AG04450 (cell line): ENCODE measurements at regions of chr6 and their contacts with region 1.

Region 1: DNA sequence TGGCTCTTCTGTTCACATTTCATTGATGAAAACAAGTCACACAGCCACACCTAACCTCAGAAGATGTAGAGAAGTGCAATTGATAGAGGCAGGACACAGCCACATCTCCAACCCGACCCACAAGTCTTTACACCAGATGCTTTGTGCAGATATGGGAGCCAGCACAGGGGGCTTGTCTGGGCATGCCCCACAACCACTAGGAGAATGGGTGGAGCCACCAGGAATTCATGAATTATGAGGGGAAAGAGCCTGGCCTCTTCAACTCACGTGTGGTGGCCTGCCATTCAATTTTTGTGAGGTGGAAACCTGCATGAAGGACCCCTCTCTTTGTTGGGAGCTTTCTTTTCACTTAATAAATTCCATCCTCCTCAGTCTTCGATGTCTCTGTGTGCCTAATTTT is 79.1 kb downstream of the OGFRL1 start:
- DNase-seq: no peak
- H3K4me3 ChIP-seq: no peak overlapping the region
- H3K27ac ChIP-seq: peak overlapping the region; percentile 25
- H3K27me3 ChIP-seq: no peaks in the 10 kb centered on the region
- CTCF ChIP-seq: no peak

Region 2: DNA sequence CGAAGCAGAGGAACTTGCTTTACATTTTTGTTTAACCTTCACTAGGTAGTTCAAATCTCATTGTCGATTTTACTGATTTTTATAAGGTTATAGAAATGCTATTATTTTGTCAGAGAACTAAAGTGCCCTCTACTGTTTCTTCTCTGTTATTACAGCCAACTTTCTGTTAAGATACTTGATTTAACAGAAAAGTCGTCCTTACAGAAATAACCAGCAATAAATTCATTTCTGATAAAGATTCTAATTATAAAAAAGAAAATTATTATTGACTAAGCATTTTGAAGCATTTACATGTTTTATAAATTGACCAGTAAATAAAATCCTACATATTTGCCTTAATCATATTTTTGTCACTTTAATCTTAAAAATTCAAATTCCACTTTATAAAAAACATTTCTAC is 18.4 kb before region 1 on chr6:
- CTCF ChIA-PET with region 1: interaction called, 12 read pairs
- POLR2A ChIA-PET with region 1: no interaction called
- DNase-seq: no peak
- H3K4me3 ChIP-seq: no peak overlapping the region
- H3K27ac ChIP-seq: no peak overlapping the region
- H3K27me3 ChIP-seq: no peaks in the 10 kb centered on the region
- CTCF ChIP-seq: peak; percentile 65

Region 3: GRCh38 chr6:71502961-71503360 is 135.2 kb after region 1 on chr6:
- CTCF ChIA-PET with region 1: no interaction called
- POLR2A ChIA-PET with region 1: no interaction called
- DNase-seq: no peak
- H3K4me3 ChIP-seq: no peak overlapping the region
- H3K27ac ChIP-seq: no peak overlapping the region
- H3K27me3 ChIP-seq: no peaks in the 10 kb centered on the region
- CTCF ChIP-seq: no peak